ENCODE measurements at regions of chr9 and their contacts with region 1.

Region 1: DNA sequence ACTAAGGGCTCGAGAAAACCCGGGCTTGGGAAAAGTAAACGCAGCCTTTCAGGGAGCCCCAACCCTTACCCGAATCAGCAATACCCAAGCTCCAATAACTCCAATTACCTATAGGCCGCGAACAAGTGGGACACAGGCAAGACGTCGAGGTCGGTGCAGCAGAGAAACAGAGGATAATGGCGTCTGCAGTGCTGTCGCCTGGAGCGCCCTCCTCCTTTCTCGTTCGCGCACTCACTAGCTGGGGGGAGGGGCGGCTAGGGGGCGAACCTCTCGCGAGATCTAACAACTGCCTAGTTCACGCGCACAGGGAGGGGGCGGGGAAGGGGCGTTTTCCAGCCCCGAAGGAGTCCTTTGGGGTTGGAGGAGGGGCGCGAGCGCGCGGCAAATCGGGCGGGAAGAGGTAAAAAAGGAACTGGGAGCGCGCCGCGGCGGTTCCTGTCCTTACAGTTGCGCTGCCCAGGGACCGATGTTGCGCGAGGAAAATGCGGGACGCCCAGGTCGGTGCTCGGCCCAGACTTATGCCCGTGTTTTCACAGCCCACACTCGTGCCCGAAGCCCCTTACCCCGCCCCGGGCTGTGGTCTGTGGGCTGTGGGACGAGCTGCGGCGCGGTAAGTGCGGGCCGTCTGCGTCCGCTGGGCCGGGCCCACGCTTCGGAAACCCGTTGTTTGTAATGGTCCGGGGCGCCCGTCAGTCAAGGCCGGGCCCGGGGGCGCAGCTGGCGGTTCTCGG is at the start of gene RMI1:
- DNase-seq: peak; percentile 97 to 99 (median 98)

Region 2: GRCh38 chr9:83920927-83921707 is 59.4 kb before region 1 on chr9 and contains the start of gene KIF27:
- intact Hi-C with region 1: loop called (anchors 5 kb)
- DNase-seq: peak; percentile 97 to 100 (median 99)

Region 3: DNA sequence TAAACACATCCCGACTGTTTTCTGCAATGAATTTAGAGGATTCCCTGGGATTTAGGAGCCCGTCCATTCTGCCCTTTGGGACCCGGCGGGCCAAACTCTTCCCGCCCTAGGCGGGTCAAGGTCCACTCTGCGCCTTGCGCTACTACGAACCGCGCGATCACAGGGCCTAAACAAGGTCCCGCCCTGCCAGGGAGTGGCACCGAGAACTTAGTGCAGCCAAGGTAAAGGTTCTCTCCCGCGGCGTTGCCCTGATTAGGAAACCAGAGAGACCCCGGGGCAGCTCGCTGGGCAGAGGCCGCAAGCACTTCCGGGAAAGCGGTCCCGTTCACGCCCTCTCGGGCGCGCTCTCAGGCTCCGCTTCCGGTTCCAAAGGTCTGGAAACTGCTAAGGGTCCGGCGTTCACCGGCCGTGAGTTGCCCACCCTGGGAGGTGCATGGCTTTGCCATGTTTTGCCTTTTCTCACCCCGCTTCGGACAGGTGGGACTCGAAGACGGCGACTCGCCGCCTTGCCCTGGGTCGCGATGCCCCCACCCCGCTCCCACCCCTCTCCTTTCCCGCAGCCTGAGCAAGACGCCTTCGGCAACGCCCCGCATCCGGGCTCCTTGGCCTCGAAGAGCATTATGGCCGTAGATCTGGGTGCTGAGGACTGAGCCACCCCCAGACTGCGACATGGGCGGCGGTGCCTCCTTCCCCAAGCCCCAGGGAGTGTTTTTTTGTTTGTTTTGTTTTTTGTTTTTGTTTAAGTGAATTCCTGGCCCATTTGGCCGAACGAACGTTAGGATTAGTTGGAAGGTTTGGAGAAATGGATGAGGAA is 23.9 kb before region 1 on chr9:
- intact Hi-C with region 1: loop called (anchors 1 kb)
- DNase-seq: peak; percentile 60 to 95 (median 72)

Measured in posterior cingulate gyrus (tissue), 11 donors.